AG04449 (cell line): ENCODE measurements at regions of chr1 and their contacts with region 1.

Region 1: GRCh38 chr1:209827384-209828262 is at the start of gene UTP25:
- DNase-seq: peak; percentile 84
- H3K4me3 ChIP-seq: peak within 1 kb of the TSS; percentile 81
- CTCF ChIP-seq: peak; percentile 68

Region 2: DNA sequence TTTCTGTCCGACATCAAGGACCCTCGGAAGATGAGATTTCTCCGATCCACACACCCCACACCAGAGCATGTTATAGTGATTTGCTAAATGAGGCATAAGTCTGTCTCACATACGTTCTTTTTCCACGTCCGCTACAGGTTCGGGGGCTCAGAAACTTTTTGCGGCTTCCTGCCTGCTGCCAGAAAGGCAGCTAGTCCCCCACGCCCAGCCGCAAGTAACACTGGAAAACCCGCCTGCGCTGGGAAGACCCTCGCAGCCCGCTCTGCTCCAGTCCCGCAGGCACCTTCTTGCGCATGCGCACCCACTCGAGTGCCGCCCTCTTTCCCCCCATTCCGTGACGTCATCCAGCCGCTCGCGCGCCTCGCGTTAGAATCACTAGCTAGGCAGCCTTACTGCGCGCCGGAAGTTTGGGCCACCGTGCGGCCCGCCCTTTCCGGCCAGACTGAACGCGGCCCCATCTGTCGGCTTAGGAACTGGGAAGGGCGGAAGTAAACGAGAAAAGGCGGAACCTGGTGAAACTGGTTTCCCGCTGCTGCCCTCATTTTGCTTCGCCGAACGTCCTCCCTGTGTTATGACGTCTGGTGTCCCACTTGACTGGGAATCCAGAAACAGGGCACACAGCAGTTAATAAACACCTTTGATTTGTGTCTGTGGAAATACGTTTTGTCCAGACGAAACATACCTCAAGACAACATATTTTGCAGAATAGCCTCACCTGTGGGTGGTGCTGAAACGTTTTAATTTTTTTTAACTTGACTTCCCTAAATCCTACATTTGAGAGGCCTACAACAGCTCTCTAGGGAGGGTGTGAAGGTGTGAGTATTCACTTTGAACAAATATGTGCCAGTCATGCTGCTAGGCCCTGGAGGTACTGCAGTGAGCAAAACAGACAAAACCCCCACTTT is 43.1 kb before region 1 on chr1 and contains the start of gene C1orf74:
- CTCF ChIA-PET with region 1: interaction called, 11 read pairs
- POLR2A ChIA-PET with region 1: interaction called, 3 read pairs
- DNase-seq: peak; percentile 77
- H3K4me3 ChIP-seq: peak within 1 kb of the TSS; percentile 94
- CTCF ChIP-seq: no peak

Region 3: GRCh38 chr1:209839875-209840491 is 12.4 kb after region 1 on chr1:
- CTCF ChIA-PET with region 1: interaction called, 109 read pairs
- POLR2A ChIA-PET with region 1: interaction called, 8 read pairs
- DNase-seq: peak; percentile 87
- H3K4me3 ChIP-seq: no peak overlapping the region; the same call in 1 of the 2 replicates
- CTCF ChIP-seq: no peak

Region 4: GRCh38 chr1:209860293-209860881 is 32.8 kb after region 1 on chr1:
- CTCF ChIA-PET with region 1: interaction called, 38 read pairs
- POLR2A ChIA-PET with region 1: no interaction called
- DNase-seq: peak; percentile 46
- H3K4me3 ChIP-seq: no peak overlapping the region
- CTCF ChIP-seq: peak; percentile 82

Region 5: DNA sequence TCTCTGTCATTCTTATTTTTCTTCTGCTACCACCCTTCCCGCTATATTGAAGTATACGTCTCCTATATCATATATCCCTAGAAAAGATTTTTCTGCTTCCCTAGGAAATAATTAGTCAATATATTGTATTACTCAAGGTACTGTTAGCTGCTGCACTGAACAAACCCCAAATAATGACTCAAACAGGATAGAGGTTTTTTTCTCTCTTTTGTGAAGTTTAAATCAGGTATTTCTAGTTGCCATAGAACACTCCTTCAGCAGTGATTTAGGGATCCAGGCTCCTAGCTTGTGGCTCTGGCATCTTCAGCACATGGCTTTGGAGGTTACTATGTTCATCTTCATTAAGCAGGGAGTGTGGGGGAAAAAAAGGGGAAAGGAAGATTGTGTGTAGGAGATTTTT is 128.5 kb after region 1 on chr1:
- CTCF ChIA-PET with region 1: no interaction called
- POLR2A ChIA-PET with region 1: no interaction called
- DNase-seq: no peak
- H3K4me3 ChIP-seq: no peak overlapping the region
- CTCF ChIP-seq: no peak

Region 6: DNA sequence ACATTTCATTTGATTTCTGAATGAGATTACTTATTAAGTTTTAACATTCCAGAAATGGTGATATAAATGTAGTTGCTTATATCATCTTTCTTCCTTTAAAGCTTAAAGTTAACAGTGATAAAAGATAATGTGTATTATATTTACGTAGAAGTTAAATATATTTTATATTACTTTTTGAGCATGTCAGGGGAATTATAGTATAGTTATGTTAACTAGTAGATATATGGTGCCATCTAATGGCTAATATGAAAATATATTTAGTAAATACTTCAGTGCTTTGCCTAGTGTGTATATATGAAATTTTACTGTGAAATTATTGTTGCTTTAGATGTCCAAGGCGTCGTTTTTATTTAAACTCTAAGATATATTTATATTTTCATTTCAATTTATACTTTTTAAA is 161.9 kb after region 1 on chr1:
- CTCF ChIA-PET with region 1: interaction called, 46 read pairs
- POLR2A ChIA-PET with region 1: no interaction called
- DNase-seq: no peak
- H3K4me3 ChIP-seq: no peak overlapping the region
- CTCF ChIP-seq: no peak